MCF 10A (cell line): ENCODE measurements at regions of chr1 and their contacts with region 1.

Region 1: DNA sequence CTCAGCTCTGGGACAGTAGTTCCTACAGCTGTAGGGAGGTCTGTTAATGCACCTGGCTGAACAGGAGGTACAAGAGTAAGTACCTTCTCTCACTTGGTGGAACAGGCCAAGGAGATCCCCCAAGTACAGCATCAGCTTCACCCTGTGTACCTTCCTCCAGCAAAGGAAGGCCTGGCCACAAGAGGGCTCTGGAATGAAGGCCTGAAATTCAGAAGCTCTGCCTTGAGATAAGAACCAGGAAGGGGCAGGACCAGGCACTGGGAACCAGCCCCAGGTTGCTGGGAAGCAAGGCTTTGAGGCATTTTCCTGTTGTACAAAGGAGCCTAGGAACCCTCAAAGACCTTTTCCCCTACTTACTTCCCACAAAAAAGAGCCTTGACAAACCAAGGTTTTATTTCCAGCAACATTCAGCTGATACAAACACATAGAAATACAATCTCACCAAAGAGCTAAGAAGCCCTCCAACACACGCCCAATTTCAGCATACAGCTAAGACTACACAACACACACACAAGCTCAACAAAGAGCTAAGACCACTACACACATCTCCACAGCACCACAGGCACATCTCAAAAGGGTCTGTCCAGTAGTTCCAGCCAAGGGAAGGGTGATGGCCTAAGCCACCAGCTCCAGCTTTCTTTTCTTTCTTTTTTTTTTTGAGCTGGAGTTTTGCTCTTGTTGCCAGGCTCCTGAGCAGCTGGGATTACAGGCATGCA is 23.5 kb downstream of the F11R start:
- DNase-seq: peak; percentile 74
- H3K4me3 Mint-ChIP-seq: no peak overlapping the region
- H3K27ac Mint-ChIP-seq: no peak overlapping the region
- H3K4me1 Mint-ChIP-seq: peaks cover 35% of the 10 kb centered on the region
- H3K27me3 Mint-ChIP-seq: no peaks in the 10 kb centered on the region
- CTCF ChIP-seq: peak; percentile 44

Region 2: GRCh38 chr1:161013488-161014230 is 16.2 kb after region 1 on chr1:
- CTCF ChIA-PET with region 1: interaction called, 58 read pairs
- POLR2A ChIA-PET with region 1: interaction called, 148 read pairs
- intact Hi-C with region 1: no loop called
- DNase-seq: peak; percentile 96
- H3K4me3 Mint-ChIP-seq: peak overlapping the region; percentile 70
- H3K27ac Mint-ChIP-seq: peak overlapping the region; percentile 93
- H3K4me1 Mint-ChIP-seq: peaks cover 44% of the 10 kb centered on the region
- H3K27me3 Mint-ChIP-seq: no peaks in the 10 kb centered on the region
- CTCF ChIP-seq: no peak

Region 3: DNA sequence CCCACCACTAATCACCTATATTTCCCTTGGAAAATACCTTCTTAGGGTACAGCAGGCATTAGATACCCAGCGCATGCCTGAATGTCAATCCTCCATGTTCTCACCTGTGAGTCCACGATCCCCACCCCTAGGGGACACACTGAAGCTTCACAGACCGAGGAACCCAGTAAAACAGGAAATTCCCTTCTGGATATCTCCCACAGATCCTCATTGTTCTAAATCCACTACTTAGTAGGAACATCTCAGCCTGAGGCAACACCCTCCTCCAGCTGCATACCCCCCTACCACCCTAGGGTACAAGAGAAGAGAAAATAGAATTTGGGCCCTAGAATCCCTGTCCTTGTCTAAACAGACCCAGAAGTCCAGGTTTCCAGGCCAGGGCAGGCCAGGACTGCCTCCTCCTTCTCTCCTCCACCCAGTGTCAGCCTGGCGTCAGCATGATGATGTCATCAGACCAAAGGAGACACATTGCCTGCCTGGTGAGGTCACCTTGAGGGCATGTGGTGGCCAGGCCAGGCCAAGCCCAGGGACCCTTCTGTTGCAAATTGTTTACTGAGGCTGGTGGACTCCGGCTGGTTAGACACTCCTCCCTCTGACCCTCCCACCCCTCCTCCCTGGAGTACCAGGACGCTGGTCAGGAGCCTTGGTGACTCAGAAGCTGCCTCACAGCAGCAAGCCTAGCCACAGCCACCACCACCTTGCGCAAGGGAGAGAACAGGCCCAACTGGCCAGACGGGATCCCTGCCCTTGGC is 85.7 kb after region 1 on chr1:
- CTCF ChIA-PET with region 1: interaction called, 12 read pairs
- POLR2A ChIA-PET with region 1: no interaction called
- intact Hi-C with region 1: no loop called
- DNase-seq: peak; percentile 98
- H3K4me3 Mint-ChIP-seq: peak overlapping the region; percentile 4
- H3K27ac Mint-ChIP-seq: peak overlapping the region; percentile 90
- H3K4me1 Mint-ChIP-seq: peaks cover 73% of the 10 kb centered on the region
- H3K27me3 Mint-ChIP-seq: no peaks in the 10 kb centered on the region
- CTCF ChIP-seq: no peak

Region 4: DNA sequence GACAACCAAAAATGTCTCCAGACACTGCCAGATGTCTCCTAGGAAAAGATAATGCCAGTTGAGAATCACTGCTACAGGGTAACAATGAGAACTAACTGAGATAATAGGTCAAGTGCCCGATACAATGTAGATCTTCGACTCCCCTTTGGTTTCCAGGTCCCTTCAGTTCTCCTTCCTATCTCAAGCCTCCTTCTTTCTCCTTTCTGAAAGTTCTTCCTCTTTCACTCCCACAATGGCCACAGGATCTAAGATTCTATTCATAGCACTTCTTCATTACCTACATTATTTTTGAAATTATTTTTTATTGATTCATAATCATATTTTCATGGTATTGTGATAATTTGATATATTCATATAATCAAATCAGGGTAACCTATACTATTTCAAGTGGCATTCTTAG is 114.0 kb after region 1 on chr1:
- CTCF ChIA-PET with region 1: interaction called, 11 read pairs
- POLR2A ChIA-PET with region 1: no interaction called
- intact Hi-C with region 1: no loop called
- DNase-seq: no peak
- H3K4me3 Mint-ChIP-seq: no peak overlapping the region
- H3K27ac Mint-ChIP-seq: peak overlapping the region; percentile 21
- H3K4me1 Mint-ChIP-seq: peaks cover 44% of the 10 kb centered on the region
- H3K27me3 Mint-ChIP-seq: no peaks in the 10 kb centered on the region
- CTCF ChIP-seq: no peak

Region 5: DNA sequence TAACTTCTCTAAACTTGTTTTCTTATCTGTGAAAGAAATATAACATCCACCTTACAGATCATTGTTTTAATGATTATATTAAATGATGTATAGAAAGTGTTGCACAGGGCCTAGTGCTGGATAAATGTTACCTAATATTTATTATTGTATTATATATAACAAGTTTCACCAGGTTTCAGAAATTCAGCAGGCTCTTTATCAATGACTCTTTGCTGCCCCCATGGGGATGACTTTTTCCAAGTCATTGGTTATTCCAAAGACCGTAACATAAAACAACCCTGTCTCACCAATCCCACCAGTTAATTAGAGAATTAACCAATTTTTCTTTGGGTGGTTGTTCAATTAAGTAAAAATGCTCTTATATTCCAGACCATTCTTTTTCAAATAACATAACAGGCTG is 142.3 kb after region 1 on chr1:
- CTCF ChIA-PET with region 1: interaction called, 53 read pairs
- POLR2A ChIA-PET with region 1: interaction called, 3 read pairs
- intact Hi-C with region 1: loop called (anchors 1 kb)
- DNase-seq: peak; percentile 77
- H3K4me3 Mint-ChIP-seq: no peak overlapping the region
- H3K27ac Mint-ChIP-seq: no peak overlapping the region
- H3K4me1 Mint-ChIP-seq: peaks cover 4% of the 10 kb centered on the region
- H3K27me3 Mint-ChIP-seq: no peaks in the 10 kb centered on the region
- CTCF ChIP-seq: peak; percentile 64